ENCODE measurements at regions of chr15 and their contacts with region 1.

Region 1: GRCh38 chr15:75554717-75555116 is 24.4 kb downstream of the PTPN9 start:
- DNase-seq: no peak
- H3K4me3 ChIP-seq: no peak overlapping the region
- H3K27me3 ChIP-seq: no peaks in the 10 kb centered on the region
- CTCF ChIP-seq: no peak

Region 2: DNA sequence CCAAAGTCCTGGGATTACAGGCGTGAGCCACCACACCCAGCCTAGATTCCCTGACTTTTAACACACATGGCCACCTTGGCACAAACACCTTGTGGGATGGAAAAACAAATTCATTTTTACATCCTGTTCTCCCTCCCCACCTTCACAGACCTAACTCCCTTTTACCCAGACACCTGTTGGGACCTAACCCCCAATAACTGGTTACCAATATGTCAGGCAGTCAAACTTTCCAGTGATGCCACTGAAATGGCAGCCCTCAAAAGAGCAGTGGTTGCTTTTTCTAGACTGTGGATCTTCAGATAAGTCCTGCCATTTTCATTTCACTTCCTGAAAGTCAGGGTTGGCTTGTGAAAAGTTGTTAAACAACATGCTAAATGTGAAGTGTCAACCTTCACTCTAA is 138.1 kb before region 1 on chr15:
- CTCF ChIA-PET with region 1: no interaction called
- POLR2A ChIA-PET with region 1: no interaction called
- DNase-seq: no peak
- H3K4me3 ChIP-seq: no peak overlapping the region
- H3K27me3 ChIP-seq: no peaks in the 10 kb centered on the region
- CTCF ChIP-seq: no peak

Region 3: DNA sequence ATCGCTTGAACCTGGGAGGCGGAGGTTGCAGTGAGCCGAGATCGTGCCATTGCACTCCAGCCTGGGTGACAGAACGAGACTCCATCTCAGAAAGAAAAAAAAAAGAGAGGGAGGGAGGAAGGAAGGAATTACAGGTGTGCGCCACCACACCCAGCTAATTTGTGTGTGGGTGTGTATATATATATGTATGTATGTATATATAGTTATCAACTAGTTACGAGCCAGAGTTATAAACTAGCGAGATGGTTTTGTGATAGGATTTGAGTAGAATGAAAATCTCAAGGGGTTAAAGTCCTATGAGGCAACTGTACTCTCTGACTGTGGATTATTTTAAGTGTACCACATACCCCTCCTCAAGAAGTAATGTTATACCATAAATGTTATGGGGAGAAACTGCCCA is 52.4 kb before region 1 on chr15:
- CTCF ChIA-PET with region 1: no interaction called
- POLR2A ChIA-PET with region 1: interaction called, 28 read pairs
- DNase-seq: no peak
- H3K4me3 ChIP-seq: no peak overlapping the region
- H3K27me3 ChIP-seq: no peaks in the 10 kb centered on the region
- CTCF ChIP-seq: no peak

Region 4: DNA sequence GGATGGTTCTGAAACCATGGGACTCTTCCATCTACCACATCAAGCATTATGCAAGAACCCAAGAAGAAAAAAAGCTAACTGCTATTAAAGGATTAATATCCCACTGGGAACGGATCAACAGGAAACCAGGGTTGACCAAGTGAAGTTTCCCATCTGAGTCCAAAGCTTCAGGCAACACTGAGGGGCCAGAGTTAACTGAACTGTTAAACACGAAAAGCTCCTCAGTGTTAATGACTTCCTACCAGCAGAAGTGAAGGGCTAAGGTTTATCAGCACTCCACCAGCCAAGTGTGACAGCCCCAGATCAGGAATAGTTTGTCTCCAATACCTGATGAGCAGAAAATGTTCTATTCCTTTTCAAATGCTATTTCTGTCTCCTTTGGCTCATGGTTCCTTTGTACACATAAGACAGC is 12.3 kb before region 1 on chr15:
- CTCF ChIA-PET with region 1: interaction called, 10 read pairs
- POLR2A ChIA-PET with region 1: interaction called, 6 read pairs
- DNase-seq: no peak
- H3K4me3 ChIP-seq: no peak overlapping the region
- H3K27me3 ChIP-seq: no peaks in the 10 kb centered on the region
- CTCF ChIP-seq: no peak